Activated T-helper 2 cell treated with anti-CD3 and anti-CD28 coated beads, Interferon-gamma antibody, Interleukin-2, Interleukin-4, amounts not matched to agents 10 μg/mL and 5 μg/mL and 100 μg/mL, durations not matched to agents 14 hours and 24 hours and 36 hours (primary cell): ENCODE measurements at regions of chr2 and their contacts with region 1.

Region 1: DNA sequence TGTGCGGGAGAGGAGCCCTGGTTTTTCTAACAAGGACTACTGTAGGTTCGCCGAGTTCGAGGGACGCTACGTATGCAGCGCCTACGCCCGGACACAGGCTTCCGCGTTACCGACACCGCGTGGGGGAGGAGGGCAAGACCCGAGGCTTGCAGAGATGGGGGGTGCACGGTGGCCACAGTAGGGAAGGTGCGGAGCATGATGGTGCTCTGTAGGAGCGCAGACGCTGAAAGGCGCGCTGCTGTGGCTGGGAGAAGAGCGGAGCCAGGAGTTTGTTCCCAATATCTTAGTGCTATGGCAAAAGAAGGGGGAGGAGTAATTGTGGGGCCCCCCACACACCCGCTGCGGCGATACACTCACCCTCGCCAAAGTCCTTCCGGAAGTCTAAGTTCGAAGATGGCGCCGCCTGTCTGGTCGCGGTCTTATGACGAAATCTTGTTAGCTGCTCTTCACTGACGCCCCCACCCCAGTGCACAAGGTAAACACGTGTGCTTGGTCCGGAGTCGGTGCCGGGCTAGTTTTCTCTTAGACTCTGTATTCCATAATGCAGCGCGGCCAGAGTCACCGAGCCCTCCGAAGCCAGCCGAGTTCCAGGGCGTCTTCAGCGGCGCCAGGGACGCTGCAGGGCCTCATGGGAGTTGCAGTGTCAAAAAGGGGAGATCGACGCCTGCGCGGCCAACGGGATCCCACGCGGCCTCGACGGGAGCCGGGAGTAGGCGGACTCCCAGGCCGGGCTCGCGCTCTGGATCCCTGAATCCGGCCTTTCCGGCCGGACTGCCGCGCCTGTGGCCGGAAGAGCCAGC is at the start of gene GTF3C2:
- DNase-seq: peak; percentile 90
- H3K4me3 Mint-ChIP-seq: peak within 1 kb of the TSS; percentile 100
- H3K27ac Mint-ChIP-seq: peak within 1 kb of the TSS; percentile 98
- H3K4me1 Mint-ChIP-seq: peaks cover 31% of the 10 kb centered on the region
- H3K27me3 Mint-ChIP-seq: no peaks in the 10 kb centered on the region
- total RNA-seq, gene GTF3C2: 65.8 and 66.9 TPM in 2 replicates

Region 2: GRCh38 chr2:27071277-27071989 is 285.1 kb before region 1 on chr2 and contains the start of gene OST4:
- intact Hi-C with region 1: no loop called
- DNase-seq: peak; percentile 89
- H3K4me3 Mint-ChIP-seq: peak within 1 kb of the TSS; percentile 98
- H3K27ac Mint-ChIP-seq: peak within 1 kb of the TSS; percentile 90
- H3K4me1 Mint-ChIP-seq: peaks cover 49% of the 10 kb centered on the region
- H3K27me3 Mint-ChIP-seq: no peaks in the 10 kb centered on the region
- total RNA-seq, gene OST4: 330 and 341 TPM in 2 replicates

Region 3: DNA sequence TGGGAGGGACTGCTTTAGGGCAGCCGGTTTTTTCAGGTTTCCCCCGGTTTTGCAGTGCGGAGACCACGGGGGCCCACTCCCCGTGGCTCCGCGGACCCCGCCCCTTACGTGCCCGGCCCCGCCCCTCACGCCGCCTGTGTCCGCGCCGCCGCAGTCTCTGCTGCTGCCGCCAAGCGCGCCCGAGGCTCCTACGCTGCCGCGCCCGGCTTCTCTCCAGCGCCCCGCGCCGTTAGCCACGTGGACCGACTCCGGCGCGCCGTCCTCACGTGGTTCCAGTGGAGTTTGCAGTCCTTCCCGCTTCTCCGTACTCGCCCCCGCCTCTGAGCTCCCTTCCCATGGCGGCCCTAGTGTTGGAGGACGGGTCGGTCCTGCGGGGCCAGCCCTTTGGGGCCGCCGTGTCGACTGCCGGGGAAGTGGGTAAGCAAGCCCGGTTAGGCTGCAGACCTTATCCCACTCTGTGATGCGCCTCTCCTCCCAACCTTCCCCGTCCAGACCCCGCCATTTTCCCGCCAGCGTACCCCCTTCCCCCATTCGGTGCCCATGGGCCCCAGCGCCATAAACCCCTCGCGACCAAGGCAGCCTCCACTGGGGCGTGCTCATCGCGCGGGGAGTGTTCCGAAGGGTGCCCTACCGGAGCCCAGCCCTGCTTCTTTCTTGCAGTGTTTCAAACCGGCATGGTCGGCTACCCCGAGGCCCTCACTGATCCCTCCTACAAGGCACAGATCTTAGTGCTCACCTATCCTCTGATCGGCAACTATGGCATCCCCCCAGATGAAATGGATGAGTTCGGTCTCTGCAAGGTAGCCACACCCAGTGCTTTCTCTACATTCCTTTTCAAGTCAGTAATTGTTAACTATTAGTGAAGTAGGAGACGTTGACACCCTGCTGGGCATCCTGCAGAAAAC is 139.1 kb before region 1 on chr2 and contains the start of gene CAD:
- intact Hi-C with region 1: loop called (anchors 1 kb)
- DNase-seq: peak; percentile 85
- H3K4me3 Mint-ChIP-seq: peak within 1 kb of the TSS; percentile 89
- H3K27ac Mint-ChIP-seq: peak within 1 kb of the TSS; percentile 83
- H3K4me1 Mint-ChIP-seq: peaks cover 36% of the 10 kb centered on the region
- H3K27me3 Mint-ChIP-seq: no peaks in the 10 kb centered on the region
- total RNA-seq, gene CAD: 141 and 146 TPM in 2 replicates

Region 4: GRCh38 chr2:27322766-27323595 is 33.6 kb before region 1 on chr2 and contains the start of gene MPV17:
- intact Hi-C with region 1: loop called (anchors 2 kb)
- DNase-seq: peak; percentile 84
- H3K4me3 Mint-ChIP-seq: peak within 1 kb of the TSS; percentile 99
- H3K27ac Mint-ChIP-seq: peak within 1 kb of the TSS; percentile 92
- H3K4me1 Mint-ChIP-seq: peaks cover 17% of the 10 kb centered on the region
- H3K27me3 Mint-ChIP-seq: no peaks in the 10 kb centered on the region
- total RNA-seq, gene MPV17: 80.4 and 82.6 TPM in 2 replicates

Region 5: DNA sequence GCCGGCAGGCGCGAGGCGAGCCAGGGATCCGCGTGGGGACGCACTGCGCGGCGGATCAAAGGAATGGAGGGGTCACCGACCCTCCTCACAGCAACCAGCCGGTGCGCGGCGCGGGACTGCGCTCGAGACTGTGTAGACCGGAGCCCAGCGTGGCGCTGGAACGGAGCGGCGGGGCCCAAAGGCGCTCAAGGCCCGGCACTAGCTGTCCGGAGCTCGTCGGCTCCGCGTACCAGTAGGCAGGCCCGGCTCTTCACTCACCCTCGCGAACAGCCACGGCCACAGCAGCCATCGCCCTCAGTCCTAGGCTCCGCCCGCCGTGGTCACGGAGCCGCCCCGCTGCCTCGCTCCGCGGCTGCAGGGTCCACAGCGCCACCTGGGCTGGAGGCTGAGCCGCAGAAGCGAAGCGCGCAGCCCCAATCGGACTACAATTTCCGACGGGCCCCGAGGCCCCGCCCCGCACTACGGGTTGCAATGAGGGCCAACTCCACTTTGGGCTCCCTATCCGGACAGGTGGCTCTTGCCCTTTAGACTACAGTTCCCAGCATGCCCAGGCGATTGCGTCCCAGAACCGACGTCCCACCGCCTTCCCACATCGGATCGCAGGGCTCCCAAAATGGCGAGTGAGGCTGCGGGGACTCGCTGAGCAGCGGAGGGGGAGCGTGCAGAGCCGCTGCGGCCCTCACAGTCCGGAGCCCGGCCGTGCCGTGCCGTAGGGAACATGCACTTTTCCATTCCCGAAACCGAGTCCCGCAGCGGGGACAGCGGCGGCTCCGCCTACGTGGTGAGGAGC is 13.6 kb after region 1 on chr2 and contains the starts of genes EIF2B4 and SNX17:
- intact Hi-C with region 1: loop called (anchors 1 kb)
- DNase-seq: peak; percentile 100
- H3K4me3 Mint-ChIP-seq: peak within 1 kb of the TSS; percentile 90
- H3K27ac Mint-ChIP-seq: peak within 1 kb of the TSS; percentile 97
- H3K4me1 Mint-ChIP-seq: peaks cover 23% of the 10 kb centered on the region
- H3K27me3 Mint-ChIP-seq: no peaks in the 10 kb centered on the region
- total RNA-seq, gene EIF2B4: 43.4 and 44.8 TPM in 2 replicates
- total RNA-seq, gene SNX17: 117 and 120 TPM in 2 replicates

Region 6: GRCh38 chr2:27409321-27410073 is 52.9 kb after region 1 on chr2 and contains the start of gene PPM1G:
- intact Hi-C with region 1: loop called (anchors 1 kb)
- DNase-seq: peak; percentile 96
- H3K4me3 Mint-ChIP-seq: peak within 1 kb of the TSS; percentile 89
- H3K27ac Mint-ChIP-seq: peak within 1 kb of the TSS; percentile 88
- H3K4me1 Mint-ChIP-seq: peaks cover 20% of the 10 kb centered on the region
- H3K27me3 Mint-ChIP-seq: peaks cover 3% of the 10 kb centered on the region
- total RNA-seq, gene PPM1G: 159 and 163 TPM in 2 replicates

Region 7: DNA sequence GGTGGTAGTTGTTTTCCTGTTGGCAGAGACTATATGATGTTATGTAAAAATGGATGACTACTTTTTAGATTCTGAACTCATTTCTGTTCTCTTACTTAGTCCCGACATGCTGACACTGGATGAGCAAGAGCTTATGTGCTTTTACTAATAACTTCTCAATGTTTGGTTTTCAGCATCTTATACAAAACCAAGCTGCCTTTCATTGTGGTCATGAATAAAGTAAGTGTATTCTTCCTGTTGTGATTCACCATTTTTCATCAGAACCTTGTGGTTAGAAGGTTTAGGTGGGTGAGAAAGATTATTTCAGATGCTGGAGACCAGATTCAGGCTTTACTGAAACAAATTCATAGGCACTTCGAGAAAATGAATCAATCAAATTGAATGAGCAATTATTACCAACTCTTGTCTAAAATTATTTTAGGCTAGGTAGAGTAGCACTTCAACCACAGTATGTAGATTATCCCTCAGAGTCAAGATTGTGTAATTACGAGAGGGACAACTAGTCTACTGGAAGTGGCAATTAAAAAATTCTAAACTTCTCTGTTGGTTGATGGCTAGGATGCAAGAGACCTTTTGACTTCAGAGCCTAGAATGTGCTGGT is 281.6 kb after region 1 on chr2:
- intact Hi-C with region 1: loop called (anchors 1 kb)
- DNase-seq: no peak
- H3K4me3 Mint-ChIP-seq: peak overlapping the region; percentile 67
- H3K27ac Mint-ChIP-seq: peak overlapping the region; percentile 97
- H3K4me1 Mint-ChIP-seq: peaks cover 38% of the 10 kb centered on the region
- H3K27me3 Mint-ChIP-seq: no peaks in the 10 kb centered on the region